ENCODE measurements at regions of chr9 and their contacts with region 1.

Region 1: DNA sequence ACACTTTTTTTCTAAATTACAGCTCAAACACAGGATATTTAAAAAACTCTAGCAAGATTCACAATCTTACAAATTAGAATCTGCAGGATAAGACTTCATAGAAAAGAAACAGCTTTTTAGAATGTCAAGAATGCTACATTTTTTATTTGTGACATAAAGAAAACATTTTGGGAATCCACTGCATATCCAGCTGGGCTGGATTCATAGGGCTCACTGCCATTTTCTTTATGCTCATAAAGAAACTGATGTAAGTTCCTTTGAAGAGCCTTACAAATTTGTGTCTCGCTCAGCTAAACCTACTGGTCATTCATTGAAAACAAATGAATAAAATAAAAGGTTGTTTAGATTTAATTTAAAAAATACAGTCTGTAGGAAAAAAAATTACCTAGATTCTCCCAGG is 332.3 kb downstream of the TRPM3 start:
- DNase-seq: no peak
- H3K4me3 ChIP-seq: no peak overlapping the region
- H3K27ac ChIP-seq: no peak overlapping the region
- H3K4me1 ChIP-seq: no peaks in the 10 kb centered on the region
- H3K27me3 ChIP-seq: no peaks in the 10 kb centered on the region
- CTCF ChIP-seq: no peak

Region 2: DNA sequence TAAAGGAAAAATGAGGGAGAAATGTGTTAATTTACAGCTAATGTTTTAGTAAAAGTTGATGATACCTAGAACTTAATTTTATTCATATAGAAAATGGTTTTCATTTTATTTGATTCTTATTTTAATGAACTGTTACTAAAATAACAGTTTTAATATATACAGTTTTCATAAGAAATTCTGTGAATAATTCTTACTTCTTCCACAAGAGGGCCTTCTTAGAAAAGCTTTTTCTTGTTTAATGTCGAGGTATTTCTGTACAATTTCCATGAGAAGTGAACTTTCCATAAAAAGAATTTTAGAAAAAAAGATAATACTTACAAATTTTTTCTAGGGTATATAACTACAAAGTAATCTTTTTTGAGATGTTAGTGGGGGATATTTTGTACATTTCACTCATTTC is 448.5 kb before region 1 on chr9:
- intact Hi-C with region 1: no loop called
- DNase-seq: no peak
- H3K4me3 ChIP-seq: no peak overlapping the region
- H3K27ac ChIP-seq: no peak overlapping the region
- H3K4me1 ChIP-seq: no peaks in the 10 kb centered on the region
- H3K27me3 ChIP-seq: no peaks in the 10 kb centered on the region
- CTCF ChIP-seq: peak; percentile 42

Region 3: GRCh38 chr9:70761139-70761670 is 27.9 kb before region 1 on chr9:
- intact Hi-C with region 1: loop called (anchors 2 kb)
- DNase-seq: no peak
- H3K4me3 ChIP-seq: no peak overlapping the region
- H3K27ac ChIP-seq: no peak overlapping the region
- H3K4me1 ChIP-seq: no peaks in the 10 kb centered on the region
- H3K27me3 ChIP-seq: no peaks in the 10 kb centered on the region
- CTCF ChIP-seq: no peak

Measured in colonic mucosa (tissue), 4 donors.